SK-N-SH (cell line): ENCODE measurements at regions of chr11 and their contacts with region 1.

Region 1: DNA sequence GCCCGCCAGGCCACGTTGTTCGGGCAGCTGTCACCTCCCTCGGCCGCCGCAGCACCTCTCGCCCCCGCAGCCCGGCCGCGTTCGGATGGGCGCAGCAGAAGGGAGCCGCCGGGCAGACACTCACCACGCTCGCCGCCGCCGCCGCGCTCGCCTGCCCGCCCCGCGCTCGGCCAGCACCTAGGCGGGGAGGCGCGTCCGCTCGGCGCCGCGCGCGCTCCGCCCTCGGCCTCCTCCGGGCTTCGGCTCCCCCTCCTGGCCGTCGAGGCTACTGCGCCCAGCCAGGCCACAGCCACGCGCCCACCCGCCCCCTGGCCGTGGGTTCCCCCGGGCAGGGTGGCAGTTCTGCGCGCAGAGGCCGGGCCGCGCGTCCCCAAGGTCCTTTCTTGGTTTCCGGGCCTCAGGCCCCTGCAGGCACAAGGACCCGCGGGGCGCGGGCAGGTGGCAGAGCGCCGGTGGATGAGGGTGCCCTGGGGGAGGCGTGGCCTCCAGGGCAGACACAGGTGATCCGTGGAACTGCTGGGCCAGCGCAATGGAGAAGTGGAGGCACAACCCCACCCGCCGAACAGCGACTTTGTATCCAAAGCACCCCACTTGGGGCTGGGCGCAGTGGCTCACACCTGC is at the start of gene SLC25A22:
- DNase-seq: peak; percentile 98
- H3K4me3 ChIP-seq: peak within 1 kb of the TSS; percentile 90 to 92
- H3K27ac ChIP-seq: peak within 1 kb of the TSS; percentile 93
- H3K4me1 ChIP-seq: peaks cover 8 to 40% of the 10 kb centered on the region in 2 experiments; a peak in 2 of 4 replicates
- H3K27me3 ChIP-seq: no peaks in the 10 kb centered on the region
- CTCF ChIP-seq: peak; percentile 61
- EP300 ChIP-seq: no peak
- RAD21 ChIP-seq: peak; percentile 49
- polyA plus RNA-seq, gene SLC25A22: 40.2 and 50.9 TPM in 2 replicates

Region 2: DNA sequence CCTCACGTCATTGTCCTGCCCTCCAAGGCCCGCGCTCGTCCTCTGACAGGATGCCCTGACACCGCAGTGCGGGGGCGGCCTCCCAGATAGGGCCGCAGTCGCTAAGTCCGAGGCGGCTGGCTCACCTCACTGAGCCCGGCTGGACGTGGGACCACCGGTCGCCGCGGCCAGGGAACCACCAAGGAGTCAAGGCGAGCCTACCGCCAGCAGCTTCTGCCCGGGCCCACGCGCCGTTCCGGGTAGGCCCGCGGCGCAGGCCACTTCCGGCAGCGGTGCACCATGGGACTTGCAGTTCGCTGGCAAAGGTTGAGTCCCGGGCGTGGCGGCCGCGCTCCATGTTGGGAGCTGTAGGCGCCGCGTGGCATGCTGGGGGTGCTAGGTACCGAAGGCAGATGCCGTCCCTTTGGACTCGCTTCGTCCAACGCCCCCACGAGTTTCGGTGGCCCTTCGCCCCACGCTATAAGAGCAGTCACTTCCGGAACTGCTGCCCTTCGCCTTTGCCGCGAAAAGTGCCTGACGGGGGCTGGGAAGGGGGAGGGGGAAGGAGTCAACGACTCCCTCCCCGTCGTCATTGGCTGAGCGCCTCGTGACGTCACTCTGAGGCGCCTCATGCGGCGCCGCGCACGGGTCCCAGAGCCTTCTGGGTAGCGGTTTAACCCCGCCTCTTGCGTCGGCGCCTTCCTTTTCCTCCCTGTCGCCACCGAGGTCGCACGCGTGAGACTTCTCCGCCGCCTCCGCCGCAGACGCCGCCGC is 11.3 kb after region 1 on chr11 and contains the start of gene RPLP2:
- CTCF ChIA-PET with region 1: interaction called, 3 read pairs
- POLR2A ChIA-PET with region 1: interaction called, 14 read pairs
- DNase-seq: peak; percentile 97
- H3K4me3 ChIP-seq: peak within 1 kb of the TSS; percentile 81 to 97
- H3K27ac ChIP-seq: peak within 1 kb of the TSS; percentile 97 to 98
- H3K4me1 ChIP-seq: peaks cover 11 to 23% of the 10 kb centered on the region in 2 experiments; a peak in 2 of 4 replicates
- H3K27me3 ChIP-seq: no peaks in the 10 kb centered on the region
- CTCF ChIP-seq: no peak
- EP300 ChIP-seq: no peak
- RAD21 ChIP-seq: no peak
- polyA plus RNA-seq, gene RPLP2: 390 and 799 TPM in 2 replicates

Region 3: DNA sequence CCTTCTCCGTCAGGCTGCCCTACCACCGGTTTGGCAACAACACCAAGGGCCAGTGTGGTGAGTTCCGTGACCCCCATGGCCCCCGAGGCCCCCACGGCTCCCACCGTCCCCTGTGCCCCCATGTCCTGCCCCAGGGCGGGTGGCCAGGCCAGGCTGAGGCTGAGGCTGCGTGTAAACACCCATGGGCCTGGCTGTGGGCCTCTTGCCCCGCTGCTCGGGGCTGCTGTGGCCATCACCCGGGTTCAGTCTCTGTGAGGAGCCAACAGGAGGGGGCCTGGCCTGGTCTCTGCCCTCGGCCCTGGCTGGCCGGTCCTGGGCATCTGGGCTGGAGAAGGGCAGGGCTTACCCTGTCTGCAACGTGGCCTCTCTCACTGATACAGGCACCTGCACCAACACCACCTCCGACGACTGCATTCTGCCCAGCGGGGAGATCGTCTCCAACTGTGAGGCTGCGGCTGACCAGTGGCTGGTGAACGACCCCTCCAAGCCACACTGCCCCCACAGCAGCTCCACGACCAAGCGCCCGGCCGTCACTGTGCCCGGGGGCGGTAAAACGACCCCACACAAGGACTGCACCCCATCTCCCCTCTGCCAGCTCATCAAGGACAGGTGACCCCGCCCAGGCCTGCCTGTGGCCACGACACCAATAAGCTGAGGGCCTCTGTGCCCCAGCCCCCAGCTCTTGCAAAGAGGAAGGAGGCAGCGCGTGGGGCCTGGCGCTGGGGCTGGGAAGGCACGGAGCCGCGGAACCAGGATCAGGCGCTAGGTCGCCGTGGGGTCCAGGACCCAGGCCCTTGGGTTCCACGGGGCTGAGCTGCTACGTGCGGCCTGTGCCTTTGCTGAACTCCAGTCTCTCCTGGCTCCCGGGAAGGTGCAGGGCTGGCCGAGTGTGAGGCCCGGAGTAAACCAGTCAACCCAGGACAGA is 305.5 kb after region 1 on chr11:
- CTCF ChIA-PET with region 1: no interaction called
- POLR2A ChIA-PET with region 1: no interaction called
- DNase-seq: no peak
- H3K4me3 ChIP-seq: no peak overlapping the region
- H3K27ac ChIP-seq: no peak overlapping the region
- H3K4me1 ChIP-seq: no peaks in the 10 kb centered on the region
- H3K27me3 ChIP-seq: no peaks in the 10 kb centered on the region
- CTCF ChIP-seq: no peak
- EP300 ChIP-seq: no peak
- RAD21 ChIP-seq: no peak